Activated T-helper 1 cell treated with anti-CD3 and anti-CD28 coated beads, Interleukin-12 subunit alpha, Interleukin-12 subunit beta, Interleukin-2, Interleukin-4 antibody, amounts not matched to agents 30 ng/mL and 10 ng/mL and 1 ng/mL, durations not matched to agents 14 hours and 24 hours and 36 hours (primary cell): ENCODE measurements at regions of chr12 and their contacts with region 1.

Region 1: DNA sequence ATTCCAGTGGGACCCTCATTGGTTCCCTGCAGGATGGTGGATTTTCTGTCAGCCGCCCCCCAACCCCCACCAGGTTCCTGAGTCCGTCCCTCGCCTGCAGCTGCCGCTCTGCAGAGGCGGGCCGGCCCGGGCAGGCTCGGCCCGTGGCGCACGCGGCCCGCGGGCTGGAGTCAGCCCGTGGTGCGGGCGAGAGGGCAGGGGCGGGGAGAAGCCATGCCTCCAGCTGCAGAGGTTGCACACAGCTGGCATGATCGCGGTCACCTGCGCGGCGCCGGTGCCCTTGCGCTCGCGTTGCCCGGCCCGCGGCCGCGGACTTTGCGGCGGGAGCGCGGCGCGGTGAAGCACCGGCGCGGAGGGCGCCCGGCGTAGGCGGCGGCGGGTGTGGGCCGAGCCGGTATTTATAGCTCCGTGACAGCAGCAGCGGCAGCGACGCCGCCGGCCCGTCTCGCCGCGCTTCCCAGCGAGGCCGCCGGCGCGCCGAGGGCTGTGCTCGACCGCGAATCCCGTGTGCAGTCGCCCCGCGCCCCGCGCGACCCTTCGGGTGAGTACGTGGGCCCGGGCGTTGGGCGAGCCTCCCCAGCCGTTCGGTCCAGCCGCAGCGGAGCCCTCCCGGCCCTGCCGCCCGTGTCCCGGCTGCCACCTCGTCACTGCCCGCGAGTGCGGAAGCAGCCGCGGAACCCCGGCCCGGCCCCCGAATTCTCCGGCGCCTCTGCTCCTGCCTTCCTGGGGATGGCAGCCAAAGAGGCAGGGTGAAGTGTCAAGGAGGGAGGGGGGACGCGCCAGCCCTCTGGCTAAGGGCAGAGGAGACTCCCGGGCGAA is at the start of gene TMEM117:
- DNase-seq: peak; percentile 42
- H3K4me3 Mint-ChIP-seq: peak within 1 kb of the TSS; percentile 78
- H3K27ac Mint-ChIP-seq: peak within 1 kb of the TSS; percentile 64
- H3K4me1 Mint-ChIP-seq: peaks cover 37% of the 10 kb centered on the region
- H3K27me3 Mint-ChIP-seq: peaks cover 19% of the 10 kb centered on the region
- total RNA-seq, gene TMEM117: 1.1 and 2.2 TPM in 2 replicates

Region 2: DNA sequence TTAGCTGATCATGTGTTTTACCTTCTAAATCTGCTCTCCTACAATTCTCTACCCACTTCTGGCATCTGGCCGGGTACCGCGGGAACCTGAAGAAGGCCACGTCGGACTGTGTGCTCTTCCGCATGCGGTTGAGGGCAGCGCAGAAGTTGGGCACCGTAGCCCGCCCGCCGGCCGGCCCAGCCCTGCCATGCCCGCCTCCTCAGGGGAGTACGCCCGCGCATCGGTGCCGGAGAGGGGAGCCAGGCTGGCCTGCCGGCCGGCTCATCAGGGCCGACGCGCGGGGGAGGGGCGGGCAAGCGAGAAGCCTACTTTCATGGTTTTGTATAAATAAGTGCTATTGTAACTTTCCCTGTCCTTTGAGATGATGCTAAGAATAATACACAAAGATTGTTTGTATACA is 264.0 kb before region 1 on chr12:
- intact Hi-C with region 1: no loop called
- DNase-seq: no peak
- H3K4me3 Mint-ChIP-seq: no peak overlapping the region
- H3K27ac Mint-ChIP-seq: no peak overlapping the region
- H3K4me1 Mint-ChIP-seq: no peaks in the 10 kb centered on the region
- H3K27me3 Mint-ChIP-seq: no peaks in the 10 kb centered on the region

Region 3: DNA sequence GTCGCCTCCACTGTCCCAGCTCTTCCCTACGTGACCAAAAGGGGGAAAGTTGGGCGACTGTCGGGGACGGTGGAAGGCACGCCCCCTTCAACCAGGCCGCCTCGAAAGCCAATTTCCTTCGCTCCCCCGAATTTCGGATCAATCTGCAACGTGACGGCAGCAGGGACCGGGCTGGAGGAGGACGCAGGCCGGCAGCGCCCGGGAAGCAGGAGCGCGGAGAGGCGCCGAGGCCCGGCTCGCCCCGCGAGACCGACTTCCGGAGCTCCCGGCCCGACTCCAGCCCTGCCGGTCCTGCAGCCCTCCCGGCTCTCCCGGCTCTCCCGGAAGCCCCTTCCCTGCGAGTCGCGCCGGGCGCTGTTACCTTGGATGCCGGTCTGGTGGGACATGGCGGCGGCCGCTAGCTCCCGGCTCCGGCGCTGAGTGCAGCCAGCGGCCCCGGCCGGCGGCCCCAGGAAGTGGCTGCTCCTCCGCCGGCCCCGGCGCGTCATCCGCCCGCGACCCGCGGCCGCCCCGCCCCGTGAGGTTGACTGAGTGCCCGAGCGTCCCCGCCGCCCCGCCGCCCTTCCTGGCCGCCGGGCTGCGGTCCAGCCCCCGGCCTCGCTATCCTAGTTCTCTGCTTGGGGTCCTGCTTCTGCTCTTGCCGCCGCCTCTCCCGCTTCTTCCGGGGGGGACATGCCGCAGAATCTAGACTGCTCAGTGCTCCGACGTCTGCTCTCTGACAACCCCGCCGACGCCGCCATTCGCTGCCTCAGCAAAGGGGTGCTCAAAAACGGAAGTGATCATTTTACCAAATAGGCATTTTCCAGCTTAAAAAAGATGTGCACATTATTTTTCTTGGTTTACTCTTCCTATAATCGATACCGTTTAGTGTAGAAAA is 29.8 kb before region 1 on chr12 and contains the start of gene TWF1:
- intact Hi-C with region 1: loop called (anchors 1 kb)
- DNase-seq: peak; percentile 87
- H3K4me3 Mint-ChIP-seq: peak within 1 kb of the TSS; percentile 96
- H3K27ac Mint-ChIP-seq: peak within 1 kb of the TSS; percentile 100
- H3K4me1 Mint-ChIP-seq: peaks cover 33% of the 10 kb centered on the region
- H3K27me3 Mint-ChIP-seq: peaks cover 2% of the 10 kb centered on the region
- total RNA-seq, gene TWF1: 28.4 and 29.2 TPM in 2 replicates